ENCODE measurements at regions of chr15 and their contacts with region 1.

Region 1: GRCh38 chr15:46059921-46060594 is 425.2 kb downstream of the SQOR start:
- DNase-seq: no peak
- ATAC-seq: no peak
- H3K4me3 ChIP-seq: no peak overlapping the region
- H3K27ac ChIP-seq: no peak overlapping the region
- H3K4me1 ChIP-seq: no peaks in the 10 kb centered on the region
- H3K27me3 ChIP-seq: no peaks in the 10 kb centered on the region

Region 2: GRCh38 chr15:46014532-46014931 is 45.5 kb before region 1 on chr15:
- intact Hi-C with region 1: loop called in 1 of 2 experiments (anchors 10 kb)
- DNase-seq: no peak
- ATAC-seq: no peak
- H3K4me3 ChIP-seq: no peak overlapping the region
- H3K27ac ChIP-seq: no peak overlapping the region
- H3K4me1 ChIP-seq: no peaks in the 10 kb centered on the region
- H3K27me3 ChIP-seq: no peaks in the 10 kb centered on the region

Region 3: DNA sequence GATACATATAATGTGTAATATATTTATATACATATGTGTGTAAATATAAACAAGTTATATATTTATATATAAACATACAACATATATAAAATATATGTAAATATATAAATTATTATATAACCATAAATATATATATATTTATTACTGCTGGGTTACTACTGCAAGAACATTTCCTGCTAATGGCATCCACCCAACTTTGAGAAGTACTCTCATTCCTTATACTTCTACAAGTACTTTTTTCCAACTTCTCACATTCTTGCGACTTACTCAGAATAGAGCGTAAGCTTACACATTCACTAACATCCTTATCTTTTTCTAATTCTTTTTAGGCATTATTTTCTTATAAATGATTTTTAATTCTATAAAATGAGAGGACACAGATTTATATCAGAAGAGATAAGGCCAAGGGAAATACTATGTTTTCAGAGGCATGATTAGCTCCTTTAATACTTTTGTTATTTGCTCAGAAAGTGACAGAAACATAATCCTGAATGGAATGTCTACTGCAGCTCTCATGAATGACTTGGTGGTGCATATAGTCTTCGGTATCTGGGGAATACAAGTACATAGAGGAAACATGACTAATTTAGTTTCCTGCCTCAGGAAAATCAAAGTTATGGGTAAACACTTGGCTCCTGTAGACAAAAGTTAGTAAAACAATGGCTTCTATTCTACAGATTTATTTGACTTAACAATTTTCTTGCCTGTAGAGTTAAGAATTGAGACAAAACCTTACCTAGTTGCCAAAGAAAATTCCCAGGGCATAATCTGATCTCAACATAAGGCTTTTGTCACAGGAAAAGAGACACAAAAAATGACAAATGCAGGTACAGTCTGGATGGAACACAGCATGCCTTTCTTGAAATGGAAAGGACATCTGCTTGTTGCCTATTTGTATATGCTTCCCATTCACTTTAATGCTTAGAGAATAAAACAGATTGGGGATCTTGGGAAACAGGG is 28.7 kb after region 1 on chr15:
- intact Hi-C with region 1: no loop called
- DNase-seq: no peak
- ATAC-seq: no peak
- H3K4me3 ChIP-seq: no peak overlapping the region
- H3K27ac ChIP-seq: no peak overlapping the region
- H3K4me1 ChIP-seq: no peaks in the 10 kb centered on the region
- H3K27me3 ChIP-seq: no peaks in the 10 kb centered on the region

Region 4: DNA sequence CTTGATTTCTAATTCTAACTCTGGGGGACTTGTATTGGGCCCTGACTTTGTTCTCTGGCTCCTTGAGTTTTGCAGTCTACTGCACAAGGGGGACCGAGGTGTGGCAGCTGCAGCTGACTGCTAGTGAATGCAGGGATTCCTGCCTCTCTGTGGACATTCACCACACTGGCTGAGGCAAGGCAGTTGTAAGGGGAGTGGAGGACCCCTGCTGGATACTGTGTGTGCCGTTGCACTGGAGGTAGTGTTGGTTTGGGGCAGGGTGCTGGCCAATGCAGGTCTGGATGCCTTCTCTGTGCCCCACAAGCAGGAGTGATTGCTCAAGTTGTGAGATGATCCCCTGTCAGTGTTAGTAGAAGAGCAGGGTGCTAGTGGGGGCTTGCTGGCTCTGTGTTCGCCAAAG is 200.9 kb after region 1 on chr15:
- intact Hi-C with region 1: no loop called
- DNase-seq: no peak
- ATAC-seq: no peak
- H3K4me3 ChIP-seq: no peak overlapping the region
- H3K27ac ChIP-seq: no peak overlapping the region
- H3K4me1 ChIP-seq: no peaks in the 10 kb centered on the region
- H3K27me3 ChIP-seq: no peaks in the 10 kb centered on the region